ENCODE measurements at regions of chr3 and their contacts with region 1.

Region 1: GRCh38 chr3:192795021-192795420 is 67.7 kb upstream of the FGF12 start:
- DNase-seq: no peak
- H3K4me3 ChIP-seq: no peak overlapping the region
- H3K27ac ChIP-seq: no peak overlapping the region
- H3K4me1 ChIP-seq: no peaks in the 10 kb centered on the region
- H3K27me3 ChIP-seq: no peaks in the 10 kb centered on the region
- CTCF ChIP-seq: no peak
- EP300 ChIP-seq: no peak
- POLR2A ChIP-seq: no peak

Region 2: GRCh38 chr3:192566706-192567290 is 228.2 kb before region 1 on chr3:
- in situ Hi-C with region 1: loop called in 3 of 4 experiments (anchors 5 to 25 kb)
- intact Hi-C with region 1: loop called (anchors 10 kb)
- DNase-seq: peak; percentile 54
- H3K4me3 ChIP-seq: no peak overlapping the region
- H3K27ac ChIP-seq: no peak overlapping the region
- H3K4me1 ChIP-seq: no peaks in the 10 kb centered on the region
- H3K27me3 ChIP-seq: no peaks in the 10 kb centered on the region
- CTCF ChIP-seq: peak; percentile 45 to 67 (median 61)
- EP300 ChIP-seq: no peak
- POLR2A ChIP-seq: no peak

Region 3: GRCh38 chr3:192747746-192748145 is 47.3 kb before region 1 on chr3:
- in situ Hi-C with region 1: no loop called
- intact Hi-C with region 1: no loop called
- DNase-seq: no peak
- H3K4me3 ChIP-seq: no peak overlapping the region
- H3K27ac ChIP-seq: no peak overlapping the region
- H3K4me1 ChIP-seq: no peaks in the 10 kb centered on the region
- H3K27me3 ChIP-seq: no peaks in the 10 kb centered on the region
- CTCF ChIP-seq: no peak
- EP300 ChIP-seq: no peak
- POLR2A ChIP-seq: no peak

Region 4: GRCh38 chr3:193080833-193081232 is 285.8 kb after region 1 on chr3:
- in situ Hi-C with region 1: no loop called
- intact Hi-C with region 1: no loop called
- DNase-seq: no peak
- H3K4me3 ChIP-seq: no peak overlapping the region
- H3K27ac ChIP-seq: no peak overlapping the region
- H3K4me1 ChIP-seq: no peaks in the 10 kb centered on the region
- H3K27me3 ChIP-seq: no peaks in the 10 kb centered on the region
- CTCF ChIP-seq: no peak
- EP300 ChIP-seq: no peak
- POLR2A ChIP-seq: no peak